ENCODE measurements at regions of chr2 and their contacts with region 1.

Region 1: GRCh38 chr2:60707750-60708371 is 48.2 kb upstream of the PAPOLG start:
- DNase-seq: peak in 1 of 2 experiments; percentile 34
- H3K4me3 ChIP-seq: no peak overlapping the region
- H3K4me3 Mint-ChIP-seq: no peak overlapping the region
- H3K27ac Mint-ChIP-seq: no peak overlapping the region
- H3K4me1 ChIP-seq: no peaks in the 10 kb centered on the region
- H3K4me1 Mint-ChIP-seq: peaks cover 6% of the 10 kb centered on the region
- H3K27me3 ChIP-seq: no peaks in the 10 kb centered on the region
- H3K27me3 Mint-ChIP-seq: no peaks in the 10 kb centered on the region
- CTCF ChIP-seq: peak; percentile 76 to 77

Region 2: GRCh38 chr2:60756191-60757041 is 48.6 kb after region 1 on chr2 and contains the start of gene PAPOLG:
- CTCF ChIA-PET with region 1: interaction called, 5 read pairs
- POLR2A ChIA-PET with region 1: no interaction called
- intact Hi-C with region 1: loop called (anchors 1 kb)
- DNase-seq: peak; percentile 96 to 97
- H3K4me3 ChIP-seq: peak within 1 kb of the TSS; percentile 97
- H3K4me3 Mint-ChIP-seq: peak within 1 kb of the TSS; percentile 93
- H3K27ac Mint-ChIP-seq: peak within 1 kb of the TSS; percentile 91
- H3K4me1 ChIP-seq: peaks cover 8% of the 10 kb centered on the region; the same call in 1 of the 2 replicates
- H3K4me1 Mint-ChIP-seq: peaks cover 11% of the 10 kb centered on the region
- H3K27me3 ChIP-seq: no peaks in the 10 kb centered on the region
- H3K27me3 Mint-ChIP-seq: no peaks in the 10 kb centered on the region
- CTCF ChIP-seq: no peak
- total RNA-seq, gene PAPOLG: 14.0 and 14.4 TPM in 2 replicates

Region 3: GRCh38 chr2:60775048-60775639 is 67.3 kb after region 1 on chr2:
- CTCF ChIA-PET with region 1: no interaction called
- POLR2A ChIA-PET with region 1: no interaction called
- intact Hi-C with region 1: loop called (anchors 5 kb)
- DNase-seq: no peak
- H3K4me3 ChIP-seq: no peak overlapping the region
- H3K4me3 Mint-ChIP-seq: no peak overlapping the region
- H3K27ac Mint-ChIP-seq: no peak overlapping the region
- H3K4me1 ChIP-seq: no peaks in the 10 kb centered on the region
- H3K4me1 Mint-ChIP-seq: no peaks in the 10 kb centered on the region
- H3K27me3 ChIP-seq: no peaks in the 10 kb centered on the region
- H3K27me3 Mint-ChIP-seq: no peaks in the 10 kb centered on the region
- CTCF ChIP-seq: no peak

Region 4: GRCh38 chr2:60998628-60999545 is 291.0 kb after region 1 on chr2:
- CTCF ChIA-PET with region 1: interaction called, 15 read pairs
- POLR2A ChIA-PET with region 1: no interaction called
- intact Hi-C with region 1: loop called (anchors 1 kb)
- DNase-seq: peak in 1 of 2 experiments; percentile 38
- H3K4me3 ChIP-seq: no peak overlapping the region
- H3K4me3 Mint-ChIP-seq: no peak overlapping the region
- H3K27ac Mint-ChIP-seq: no peak overlapping the region
- H3K4me1 ChIP-seq: no peaks in the 10 kb centered on the region
- H3K4me1 Mint-ChIP-seq: no peaks in the 10 kb centered on the region
- H3K27me3 ChIP-seq: no peaks in the 10 kb centered on the region
- H3K27me3 Mint-ChIP-seq: no peaks in the 10 kb centered on the region
- CTCF ChIP-seq: peak; percentile 43 to 49